ENCODE measurements at regions of chr1 and their contacts with region 1.

Region 1: GRCh38 chr1:164786980-164787833 is 228.2 kb downstream of the PBX1 start:
- DNase-seq: peak; percentile 93
- ATAC-seq: peak; percentile 98
- H3K4me3 ChIP-seq: no peak overlapping the region
- H3K27ac ChIP-seq: no peak overlapping the region
- H3K4me1 ChIP-seq: peaks cover 4% of the 10 kb centered on the region; the same call in 1 of the 2 replicates
- H3K27me3 ChIP-seq: no peaks in the 10 kb centered on the region
- CTCF ChIP-seq: peak; percentile 97

Region 2: GRCh38 chr1:163535807-163536206 is 1251.4 kb before region 1 on chr1:
- CTCF ChIA-PET with region 1: no interaction called
- POLR2A ChIA-PET with region 1: no interaction called
- intact Hi-C with region 1: loop called (anchors 5 kb)
- DNase-seq: peak; percentile 72
- ATAC-seq: peak; percentile 76
- H3K4me3 ChIP-seq: no peak overlapping the region
- H3K27ac ChIP-seq: no peak overlapping the region
- H3K4me1 ChIP-seq: no peaks in the 10 kb centered on the region
- H3K27me3 ChIP-seq: peaks cover 49% of the 10 kb centered on the region
- CTCF ChIP-seq: peak; percentile 84

Region 3: GRCh38 chr1:164510435-164510834 is 276.8 kb before region 1 on chr1:
- CTCF ChIA-PET with region 1: no interaction called
- POLR2A ChIA-PET with region 1: no interaction called
- intact Hi-C with region 1: loop called (anchors 1 kb)
- DNase-seq: peak; percentile 44
- ATAC-seq: peak; percentile 78
- H3K4me3 ChIP-seq: no peak overlapping the region
- H3K27ac ChIP-seq: no peak overlapping the region
- H3K4me1 ChIP-seq: no peaks in the 10 kb centered on the region
- H3K27me3 ChIP-seq: peaks cover 69% of the 10 kb centered on the region
- CTCF ChIP-seq: peak; percentile 53

Region 4: GRCh38 chr1:164558461-164559341 is 228.5 kb before region 1 on chr1 and contains the start of gene PBX1:
- CTCF ChIA-PET with region 1: interaction called, 8 read pairs
- POLR2A ChIA-PET with region 1: interaction called, 4 read pairs
- intact Hi-C with region 1: loop called (anchors 1 kb)
- DNase-seq: peak; percentile 98
- ATAC-seq: peak; percentile 98
- H3K4me3 ChIP-seq: peak within 1 kb of the TSS; percentile 71
- H3K27ac ChIP-seq: no peak within 1 kb of the TSS
- H3K4me1 ChIP-seq: peaks cover 10% of the 10 kb centered on the region
- H3K27me3 ChIP-seq: no peaks in the 10 kb centered on the region
- CTCF ChIP-seq: no peak
- total RNA-seq, gene PBX1: 8.4 and 9.8 TPM in 2 replicates

Region 5: GRCh38 chr1:164617377-164618201 is 169.6 kb before region 1 on chr1:
- CTCF ChIA-PET with region 1: no interaction called
- POLR2A ChIA-PET with region 1: no interaction called
- intact Hi-C with region 1: loop called (anchors 1 kb)
- DNase-seq: peak; percentile 70
- ATAC-seq: peak; percentile 31
- H3K4me3 ChIP-seq: no peak overlapping the region
- H3K27ac ChIP-seq: no peak overlapping the region
- H3K4me1 ChIP-seq: peaks cover 12% of the 10 kb centered on the region
- H3K27me3 ChIP-seq: no peaks in the 10 kb centered on the region
- CTCF ChIP-seq: peak; percentile 94

Region 6: GRCh38 chr1:164707868-164708331 is 79.3 kb before region 1 on chr1:
- CTCF ChIA-PET with region 1: no interaction called
- POLR2A ChIA-PET with region 1: no interaction called
- intact Hi-C with region 1: loop called (anchors 2 kb)
- DNase-seq: peak; percentile 97
- ATAC-seq: peak; percentile 79
- H3K4me3 ChIP-seq: peak overlapping the region; percentile 8; the same call in 1 of the 2 replicates
- H3K27ac ChIP-seq: peak overlapping the region; percentile 95
- H3K4me1 ChIP-seq: peaks cover 47% of the 10 kb centered on the region
- H3K27me3 ChIP-seq: no peaks in the 10 kb centered on the region
- CTCF ChIP-seq: no peak